ENCODE measurements at regions of chr2 and their contacts with region 1.

Region 1: GRCh38 chr2:229927817-229928321 is 5.6 kb downstream of the FBXO36 start:
- DNase-seq: peak; percentile 93
- ATAC-seq: peak; percentile 77
- H3K4me3 ChIP-seq: peak overlapping the region; percentile 56; the same call in 1 of the 2 replicates
- H3K27ac ChIP-seq: peak overlapping the region; percentile 83
- H3K4me1 ChIP-seq: peaks cover 48% of the 10 kb centered on the region
- H3K27me3 ChIP-seq: no peaks in the 10 kb centered on the region
- CTCF ChIP-seq: no peak

Region 2: GRCh38 chr2:229836847-229837246 is 91.0 kb before region 1 on chr2:
- CTCF ChIA-PET with region 1: no interaction called
- POLR2A ChIA-PET with region 1: interaction called, 11 read pairs
- intact Hi-C with region 1: no loop called
- DNase-seq: no peak
- ATAC-seq: no peak
- H3K4me3 ChIP-seq: no peak overlapping the region
- H3K27ac ChIP-seq: no peak overlapping the region
- H3K4me1 ChIP-seq: peaks cover 18% of the 10 kb centered on the region
- H3K27me3 ChIP-seq: no peaks in the 10 kb centered on the region
- CTCF ChIP-seq: no peak

Region 3: DNA sequence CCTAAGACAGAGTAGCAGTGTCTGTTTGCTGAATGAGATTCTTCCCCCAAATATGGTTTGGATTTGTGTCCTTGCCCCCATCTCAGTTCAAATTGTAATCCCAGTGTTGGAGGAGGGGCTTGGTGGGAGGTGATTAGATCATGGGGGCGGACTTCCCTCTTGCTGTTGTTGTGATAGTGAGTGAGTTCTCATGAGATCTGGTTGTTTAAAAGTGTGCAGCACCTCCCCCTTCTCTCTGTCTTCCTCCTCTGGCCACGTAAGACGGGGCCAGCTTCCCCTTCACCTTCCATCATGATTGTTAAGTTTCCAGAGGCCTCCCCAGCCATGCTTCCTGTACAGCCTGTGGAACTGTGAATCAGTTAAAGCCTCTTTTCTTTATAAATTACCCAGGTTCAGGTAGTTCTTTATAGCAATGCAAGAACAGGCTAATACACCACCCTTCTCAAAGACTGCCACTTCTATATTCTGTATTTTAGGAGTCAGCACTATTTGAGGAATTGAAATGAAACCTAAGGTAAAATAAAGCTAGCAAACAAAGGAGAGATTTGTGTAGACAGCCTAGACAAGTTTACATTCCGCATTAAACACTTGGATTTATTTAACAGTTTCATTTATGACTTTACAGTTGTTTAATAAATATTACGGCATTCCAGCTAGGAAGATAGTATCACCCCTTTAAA is 16.0 kb after region 1 on chr2:
- CTCF ChIA-PET with region 1: no interaction called
- POLR2A ChIA-PET with region 1: no interaction called
- intact Hi-C with region 1: no loop called
- DNase-seq: no peak
- ATAC-seq: no peak
- H3K4me3 ChIP-seq: no peak overlapping the region
- H3K27ac ChIP-seq: no peak overlapping the region
- H3K4me1 ChIP-seq: no peaks in the 10 kb centered on the region
- H3K27me3 ChIP-seq: no peaks in the 10 kb centered on the region
- CTCF ChIP-seq: no peak

Region 4: GRCh38 chr2:230007931-230008707 is 80.2 kb after region 1 on chr2:
- CTCF ChIA-PET with region 1: no interaction called
- POLR2A ChIA-PET with region 1: no interaction called
- intact Hi-C with region 1: loop called (anchors 5 kb)
- DNase-seq: peak; percentile 84
- ATAC-seq: peak; percentile 66
- H3K4me3 ChIP-seq: peak overlapping the region; percentile 18; the same call in 1 of the 2 replicates
- H3K27ac ChIP-seq: no peak overlapping the region
- H3K4me1 ChIP-seq: peaks cover 4% of the 10 kb centered on the region; the same call in 1 of the 2 replicates
- H3K27me3 ChIP-seq: no peaks in the 10 kb centered on the region
- CTCF ChIP-seq: peak; percentile 87

Measured in PC-3 (cell line).